Activated T-helper 2 cell treated with anti-CD3 and anti-CD28 coated beads, Interferon-gamma antibody, Interleukin-2, Interleukin-4, amounts not matched to agents 10 μg/mL and 5 μg/mL and 100 μg/mL, durations not matched to agents 14 hours and 24 hours and 36 hours (primary cell): ENCODE measurements at regions of chr9 and their contacts with region 1.

Region 1: DNA sequence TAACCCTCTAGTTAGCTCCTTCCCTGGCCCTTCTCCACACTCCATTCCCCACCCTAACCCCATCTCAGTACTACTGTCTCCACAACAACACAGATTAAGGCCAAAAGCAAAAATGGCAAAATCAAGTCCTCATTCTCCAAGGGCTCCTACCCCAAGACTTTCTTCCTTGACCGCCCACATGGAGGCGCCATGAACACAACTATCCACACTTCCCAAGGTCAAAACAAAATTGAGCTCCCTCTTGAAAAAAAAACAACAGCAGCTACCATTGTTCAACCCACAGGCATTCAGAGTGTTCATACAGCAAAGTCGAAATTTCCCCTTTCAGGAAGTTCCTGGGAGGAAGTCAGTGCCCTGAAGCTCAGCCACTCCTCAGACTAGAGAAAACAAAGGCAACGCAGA is 54.4 kb downstream of the GNAQ start:
- DNase-seq: peak; percentile 34
- H3K4me3 Mint-ChIP-seq: peak overlapping the region; percentile 6
- H3K27ac Mint-ChIP-seq: peak overlapping the region; percentile 83
- H3K4me1 Mint-ChIP-seq: peaks cover 56% of the 10 kb centered on the region
- H3K27me3 Mint-ChIP-seq: no peaks in the 10 kb centered on the region

Region 2: GRCh38 chr9:77833561-77834429 is 143.4 kb before region 1 on chr9:
- intact Hi-C with region 1: no loop called
- DNase-seq: no peak
- H3K4me3 Mint-ChIP-seq: no peak overlapping the region
- H3K27ac Mint-ChIP-seq: no peak overlapping the region
- H3K4me1 Mint-ChIP-seq: peaks cover 12% of the 10 kb centered on the region
- H3K27me3 Mint-ChIP-seq: no peaks in the 10 kb centered on the region

Region 3: GRCh38 chr9:77847059-77847499 is 130.1 kb before region 1 on chr9:
- intact Hi-C with region 1: loop called (anchors 5 kb)
- DNase-seq: no peak
- H3K4me3 Mint-ChIP-seq: no peak overlapping the region
- H3K27ac Mint-ChIP-seq: peak overlapping the region; percentile 43
- H3K4me1 Mint-ChIP-seq: peaks cover 34% of the 10 kb centered on the region
- H3K27me3 Mint-ChIP-seq: no peaks in the 10 kb centered on the region

Region 4: GRCh38 chr9:77909306-77909705 is 67.9 kb before region 1 on chr9:
- intact Hi-C with region 1: loop called (anchors 5 kb)
- DNase-seq: peak; percentile 41
- H3K4me3 Mint-ChIP-seq: peak overlapping the region; percentile 61
- H3K27ac Mint-ChIP-seq: peak overlapping the region; percentile 95
- H3K4me1 Mint-ChIP-seq: peaks cover 80% of the 10 kb centered on the region
- H3K27me3 Mint-ChIP-seq: no peaks in the 10 kb centered on the region

Region 5: DNA sequence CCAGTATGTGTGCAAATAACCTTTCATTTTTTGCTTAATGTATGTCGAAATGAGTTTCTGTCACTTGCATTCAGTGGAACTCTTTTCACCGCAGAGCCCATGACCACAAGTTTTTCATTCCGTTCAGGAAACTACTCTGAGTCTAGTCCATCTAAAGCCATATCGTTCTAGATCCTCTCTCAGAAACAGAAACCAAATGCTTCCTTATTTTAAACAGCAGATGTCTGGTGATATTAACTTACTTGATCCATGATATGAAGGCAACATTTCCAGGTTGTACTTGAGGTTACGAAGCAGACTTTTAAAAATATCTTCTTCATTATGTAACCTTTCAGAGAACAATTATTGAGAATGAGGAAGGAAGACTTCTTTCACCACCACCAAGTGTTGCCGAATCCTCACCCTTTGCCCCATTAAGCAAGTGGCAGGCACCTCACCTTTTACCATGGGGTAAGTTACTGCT is 126.8 kb after region 1 on chr9:
- intact Hi-C with region 1: loop called (anchors 1 kb)
- DNase-seq: peak; percentile 54
- H3K4me3 Mint-ChIP-seq: peak overlapping the region; percentile 22
- H3K27ac Mint-ChIP-seq: no peak overlapping the region
- H3K4me1 Mint-ChIP-seq: peaks cover 49% of the 10 kb centered on the region
- H3K27me3 Mint-ChIP-seq: no peaks in the 10 kb centered on the region

Region 6: DNA sequence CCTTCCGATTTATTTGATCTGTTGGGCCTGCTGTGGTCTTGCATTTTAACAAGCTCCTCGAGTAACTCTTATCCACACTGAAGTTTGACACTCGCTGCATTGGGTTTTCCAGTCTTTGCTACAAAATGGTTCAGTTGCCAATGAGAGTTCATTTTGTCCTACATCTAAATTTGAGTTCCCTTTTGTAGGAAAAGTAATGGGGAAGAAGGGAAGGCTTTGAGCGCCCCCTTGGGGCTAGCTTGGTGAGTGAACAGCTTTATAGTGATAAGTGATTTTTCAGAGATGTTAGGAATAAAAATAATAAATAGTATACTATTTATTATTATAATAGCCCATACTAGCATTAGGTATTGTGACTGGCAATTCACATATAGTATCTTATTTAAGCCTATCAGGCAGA is 144.3 kb after region 1 on chr9:
- intact Hi-C with region 1: loop called (anchors 1 kb)
- DNase-seq: peak; percentile 37
- H3K4me3 Mint-ChIP-seq: no peak overlapping the region
- H3K27ac Mint-ChIP-seq: no peak overlapping the region
- H3K4me1 Mint-ChIP-seq: peaks cover 31% of the 10 kb centered on the region
- H3K27me3 Mint-ChIP-seq: peaks cover 13% of the 10 kb centered on the region

Region 7: DNA sequence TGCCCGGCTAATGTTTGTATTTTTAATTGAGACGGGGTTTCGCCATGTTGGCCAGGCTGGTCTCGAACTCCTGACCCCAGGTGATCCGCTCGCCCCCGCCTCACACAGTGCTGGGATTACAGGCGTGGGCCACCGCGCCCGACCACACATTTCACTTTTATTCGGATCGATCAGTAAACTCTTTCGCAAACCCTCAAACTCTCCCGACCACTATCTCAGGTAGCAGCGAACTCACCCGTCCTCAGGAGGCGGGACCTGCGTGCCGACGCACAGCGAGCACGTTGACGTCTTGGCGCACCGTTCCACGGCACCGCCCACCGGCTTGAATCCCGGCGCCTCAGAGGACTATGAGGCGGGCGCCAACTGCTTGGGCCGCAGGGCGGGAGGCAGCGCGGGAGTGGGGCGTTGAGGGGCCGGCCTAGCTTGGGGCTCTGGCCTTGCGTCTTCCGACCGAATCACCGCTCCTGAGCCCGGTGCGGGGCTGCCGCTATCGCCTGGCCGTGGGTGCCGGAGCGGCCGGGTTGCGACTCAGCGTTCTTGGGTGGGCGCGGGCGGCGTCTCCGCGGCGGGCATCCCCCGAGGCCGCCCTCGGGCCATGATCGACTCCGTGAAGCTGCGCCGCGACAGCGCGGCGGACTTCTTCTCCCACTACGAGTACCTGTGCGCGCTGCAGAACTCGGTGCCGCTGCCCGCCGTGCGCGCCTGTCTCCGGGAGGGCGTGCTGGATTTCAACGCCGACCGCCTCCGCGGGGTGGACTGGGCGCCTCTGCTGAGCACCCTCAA is 258.7 kb after region 1 on chr9 and contains the start of gene CEP78:
- intact Hi-C with region 1: loop called (anchors 10 kb)
- DNase-seq: peak; percentile 86
- H3K4me3 Mint-ChIP-seq: no peak within 1 kb of the TSS
- H3K27ac Mint-ChIP-seq: peak within 1 kb of the TSS; percentile 87
- H3K4me1 Mint-ChIP-seq: peaks cover 35% of the 10 kb centered on the region
- H3K27me3 Mint-ChIP-seq: no peaks in the 10 kb centered on the region
- total RNA-seq, gene CEP78: 33.7 and 36.5 TPM in 2 replicates